ENCODE measurements at regions of chr12 and their contacts with region 1.

Region 1: GRCh38 chr12:111313833-111314259 is 55.0 kb downstream of the PHETA1 start:
- DNase-seq: peak; percentile 85
- H3K4me3 ChIP-seq: peak overlapping the region in 1 of 4 donors; percentile 5
- H3K27ac ChIP-seq: no peak overlapping the region
- H3K4me1 ChIP-seq: no peaks in the 10 kb centered on the region
- H3K27me3 ChIP-seq: peaks cover 0 to 25% (median 0%) of the 10 kb centered on the region in 3 donors
- CTCF ChIP-seq: peak; percentile 79 to 92 (median 84)
- EP300 ChIP-seq: no peak
- POLR2A ChIP-seq: no peak

Region 2: DNA sequence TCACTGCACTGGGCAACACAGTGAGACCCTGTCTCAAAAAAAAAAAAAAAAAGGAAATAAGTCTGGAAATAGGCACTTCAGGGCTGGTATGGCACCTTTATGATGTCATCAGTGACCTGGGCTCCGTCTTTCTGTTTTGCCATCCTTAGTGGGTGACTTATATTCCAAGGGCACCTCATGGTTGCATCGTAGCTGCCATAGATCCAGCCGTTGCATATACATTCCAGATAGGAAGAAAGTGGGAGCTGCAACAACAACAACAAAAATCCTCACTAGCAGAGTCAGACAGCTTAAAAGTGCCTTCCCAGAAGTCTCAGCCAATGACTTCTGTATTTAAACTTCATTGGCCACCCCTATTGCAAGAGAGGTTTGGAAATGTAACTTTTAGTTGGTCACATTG is 419.9 kb before region 1 on chr12:
- intact Hi-C with region 1: loop called (anchors 1 kb)
- DNase-seq: no peak
- H3K4me3 ChIP-seq: no peak overlapping the region
- H3K27ac ChIP-seq: no peak overlapping the region
- H3K4me1 ChIP-seq: peaks cover 0 to 9% (median 3%) of the 10 kb centered on the region in 4 donors
- H3K27me3 ChIP-seq: no peaks in the 10 kb centered on the region
- CTCF ChIP-seq: no peak
- EP300 ChIP-seq: no peak
- POLR2A ChIP-seq: no peak

Region 3: GRCh38 chr12:110937104-110937641 is 376.7 kb before region 1 on chr12:
- intact Hi-C with region 1: loop called (anchors 2 kb)
- DNase-seq: no peak
- H3K4me3 ChIP-seq: no peak overlapping the region
- H3K27ac ChIP-seq: no peak overlapping the region
- H3K4me1 ChIP-seq: peaks cover 0 to 8% (median 3%) of the 10 kb centered on the region in 4 donors
- H3K27me3 ChIP-seq: peaks cover 0 to 23% (median 3%) of the 10 kb centered on the region in 3 donors
- CTCF ChIP-seq: peak; percentile 54 to 94 (median 78)
- EP300 ChIP-seq: no peak
- POLR2A ChIP-seq: no peak

Region 4: DNA sequence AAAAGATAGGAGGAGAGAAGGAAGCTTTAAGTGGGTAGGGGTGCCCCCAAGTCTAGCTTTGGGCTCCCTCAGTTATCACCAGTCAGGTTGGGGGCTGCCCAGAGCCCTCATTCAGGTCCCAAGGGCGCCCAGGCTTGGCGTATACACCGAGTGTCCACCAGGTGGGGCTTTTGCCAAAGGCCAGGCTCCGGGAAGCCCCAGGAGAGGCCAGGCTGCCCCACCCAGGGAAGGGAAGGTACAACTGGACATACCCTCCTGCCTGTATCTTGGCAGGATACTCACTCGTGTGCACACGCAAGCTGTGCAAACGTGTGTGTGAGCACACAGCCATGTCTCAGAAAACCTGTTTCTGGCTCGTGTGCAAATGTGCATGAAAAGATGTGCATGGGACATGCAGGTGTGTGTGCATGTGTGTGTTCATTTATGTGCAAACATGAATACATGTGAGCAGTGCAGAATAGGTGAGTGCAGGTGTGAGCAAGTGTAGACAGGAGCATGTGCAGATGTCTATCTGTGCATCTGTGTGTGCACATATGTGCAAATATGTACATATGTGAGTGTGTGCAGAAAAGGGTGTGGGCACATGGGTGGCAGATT is 289.5 kb before region 1 on chr12:
- intact Hi-C with region 1: loop called (anchors 2 kb)
- DNase-seq: peak; percentile 71
- H3K4me3 ChIP-seq: no peak overlapping the region
- H3K27ac ChIP-seq: no peak overlapping the region
- H3K4me1 ChIP-seq: no peaks in the 10 kb centered on the region
- H3K27me3 ChIP-seq: peaks cover 0 to 70% (median 0%) of the 10 kb centered on the region in 3 donors
- CTCF ChIP-seq: peak; percentile 23 to 77 (median 68)
- EP300 ChIP-seq: no peak
- POLR2A ChIP-seq: no peak